ENCODE measurements at regions of chr22 and their contacts with region 1.

Region 1: GRCh38 chr22:21982338-21982965 is at the start of gene TOP3B:
- DNase-seq: peak; percentile 91
- ATAC-seq: peak; percentile 95
- H3K4me3 Mint-ChIP-seq: peak within 1 kb of the TSS; percentile 88
- H3K27ac Mint-ChIP-seq: peak within 1 kb of the TSS; percentile 80
- H3K4me1 Mint-ChIP-seq: peaks cover 35% of the 10 kb centered on the region
- H3K27me3 Mint-ChIP-seq: no peaks in the 10 kb centered on the region
- total RNA-seq, gene TOP3B: 27.3 to 33.8 TPM

Region 2: DNA sequence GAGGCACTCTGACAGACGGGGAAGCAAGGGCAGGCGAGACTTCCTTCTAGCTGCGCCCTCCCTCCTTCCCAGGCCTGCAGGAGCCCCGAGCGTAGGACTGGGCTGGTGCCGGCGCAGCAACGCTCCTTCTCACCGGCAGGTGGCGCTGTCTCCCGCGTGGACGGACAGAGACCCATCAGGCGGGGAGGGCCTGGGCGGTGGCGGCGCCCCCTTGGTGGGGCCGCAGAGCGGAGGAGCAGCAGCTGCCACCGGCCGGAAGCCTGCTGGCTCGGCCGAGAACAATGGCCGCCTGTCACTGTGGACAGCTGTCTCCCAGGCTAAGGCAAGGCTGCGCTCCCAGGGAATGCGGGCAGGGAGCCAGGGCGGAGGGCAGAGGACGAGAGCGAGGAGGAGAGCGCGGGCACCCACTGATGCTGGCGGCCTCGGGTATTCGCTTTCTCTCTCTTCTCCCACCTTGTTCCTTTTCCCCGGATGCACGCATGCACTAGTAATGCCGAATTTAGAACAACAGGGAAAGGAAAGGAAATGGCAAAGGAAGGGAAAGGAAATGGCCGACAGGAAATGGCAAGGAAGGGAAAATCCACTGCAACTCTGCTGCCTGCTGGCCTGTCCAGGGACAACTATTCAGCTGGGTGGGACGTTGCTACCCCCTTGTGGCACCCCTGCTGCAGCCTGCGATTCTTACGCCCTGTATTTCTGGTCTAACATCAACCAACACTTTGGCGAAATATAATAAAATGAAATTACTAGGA is 44.2 kb before region 1 on chr22:
- CTCF ChIA-PET with region 1: interaction called, 7 read pairs
- POLR2A ChIA-PET with region 1: no interaction called
- intact Hi-C with region 1: loop called in 1 of 2 experiments (anchors 1 kb)
- DNase-seq: peak; percentile 95
- ATAC-seq: peak; percentile 95
- H3K4me3 Mint-ChIP-seq: peak overlapping the region; percentile 67
- H3K27ac Mint-ChIP-seq: peak overlapping the region; percentile 79
- H3K4me1 Mint-ChIP-seq: peaks cover 43% of the 10 kb centered on the region
- H3K27me3 Mint-ChIP-seq: no peaks in the 10 kb centered on the region

Region 3: GRCh38 chr22:21972293-21972779 is 10.1 kb before region 1 on chr22:
- CTCF ChIA-PET with region 1: interaction called, 28 read pairs
- POLR2A ChIA-PET with region 1: no interaction called
- intact Hi-C with region 1: loop called in 1 of 2 experiments (anchors 1 kb)
- DNase-seq: peak; percentile 72
- ATAC-seq: peak; percentile 63
- H3K4me3 Mint-ChIP-seq: no peak overlapping the region
- H3K27ac Mint-ChIP-seq: no peak overlapping the region
- H3K4me1 Mint-ChIP-seq: no peaks in the 10 kb centered on the region
- H3K27me3 Mint-ChIP-seq: no peaks in the 10 kb centered on the region

Region 4: GRCh38 chr22:22030493-22031182 is 48.2 kb after region 1 on chr22:
- CTCF ChIA-PET with region 1: no interaction called
- POLR2A ChIA-PET with region 1: no interaction called
- intact Hi-C with region 1: no loop called
- DNase-seq: peak; percentile 18
- ATAC-seq: no peak
- H3K4me3 Mint-ChIP-seq: no peak overlapping the region
- H3K27ac Mint-ChIP-seq: no peak overlapping the region
- H3K4me1 Mint-ChIP-seq: no peaks in the 10 kb centered on the region
- H3K27me3 Mint-ChIP-seq: no peaks in the 10 kb centered on the region

Region 5: DNA sequence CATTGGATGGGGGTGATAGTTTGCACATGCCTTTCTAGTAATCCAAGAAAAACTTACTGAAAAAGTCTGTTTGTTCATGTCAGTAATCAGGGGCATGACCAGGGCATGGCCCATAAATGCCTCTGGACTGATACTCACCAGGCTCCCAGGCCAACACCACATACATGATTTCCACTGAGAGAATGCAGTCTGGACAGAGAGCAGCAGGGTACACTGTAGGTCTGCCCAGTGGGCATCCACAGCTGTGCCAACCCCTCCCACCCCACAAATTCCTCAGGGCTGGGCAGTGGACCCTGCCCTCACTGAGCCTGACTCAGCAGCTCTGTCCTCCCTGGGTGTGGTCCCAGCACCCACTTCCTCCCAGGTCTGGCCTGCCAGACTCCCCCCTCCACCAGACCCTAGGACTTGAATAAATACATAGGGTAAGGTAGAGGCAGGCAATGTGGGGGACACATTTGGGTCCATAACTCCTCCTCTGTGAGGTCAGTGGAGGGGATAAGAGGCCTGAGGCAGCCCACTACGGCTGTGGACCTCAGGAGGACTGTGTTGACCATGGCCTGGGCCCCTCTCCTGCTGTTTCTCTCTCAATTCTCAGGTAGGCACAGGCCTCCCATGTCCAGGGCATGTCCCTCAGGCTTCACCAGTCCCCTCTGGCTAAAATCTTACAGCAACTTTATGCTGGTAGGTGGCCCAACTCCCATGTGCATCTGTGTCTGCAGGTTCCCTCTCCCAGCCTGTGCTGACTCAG is 92.4 kb after region 1 on chr22:
- CTCF ChIA-PET with region 1: no interaction called
- POLR2A ChIA-PET with region 1: no interaction called
- intact Hi-C with region 1: no loop called
- DNase-seq: no peak
- ATAC-seq: no peak
- H3K4me3 Mint-ChIP-seq: no peak overlapping the region
- H3K27ac Mint-ChIP-seq: no peak overlapping the region
- H3K4me1 Mint-ChIP-seq: no peaks in the 10 kb centered on the region
- H3K27me3 Mint-ChIP-seq: peaks cover 22% of the 10 kb centered on the region

Measured in activated CD4-positive, alpha-beta T cell treated with anti-CD3 and anti-CD28 coated beads for 36 hours (primary cell).